Posterior vena cava (tissue), 2 donors: ENCODE measurements at regions of chr16 and their contacts with region 1.

Region 1: DNA sequence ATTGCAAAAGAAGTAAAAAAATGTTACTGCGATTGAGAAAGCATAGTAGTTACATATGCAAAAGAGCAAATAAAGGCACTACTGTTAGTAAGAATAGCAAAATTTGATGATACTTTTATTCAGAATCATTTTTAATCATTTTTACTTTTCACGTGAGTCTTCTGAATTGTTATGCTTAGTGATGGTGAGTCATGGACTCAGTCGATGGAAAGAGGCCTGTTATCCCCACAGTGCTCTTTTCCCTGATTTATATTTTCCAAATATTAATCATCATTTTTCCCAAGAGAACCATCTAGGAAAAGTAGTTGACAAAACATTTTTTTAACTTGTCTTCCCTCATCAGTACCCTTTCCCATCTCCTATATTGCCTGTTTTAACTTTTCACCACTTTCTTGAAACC is 181.1 kb downstream of the CHD9 start:
- DNase-seq: no peak

Region 2: GRCh38 chr16:53266156-53266555 is 30.3 kb after region 1 on chr16:
- intact Hi-C with region 1: loop called in 1 of 2 experiments (anchors 5 kb)
- DNase-seq: no peak

Region 3: DNA sequence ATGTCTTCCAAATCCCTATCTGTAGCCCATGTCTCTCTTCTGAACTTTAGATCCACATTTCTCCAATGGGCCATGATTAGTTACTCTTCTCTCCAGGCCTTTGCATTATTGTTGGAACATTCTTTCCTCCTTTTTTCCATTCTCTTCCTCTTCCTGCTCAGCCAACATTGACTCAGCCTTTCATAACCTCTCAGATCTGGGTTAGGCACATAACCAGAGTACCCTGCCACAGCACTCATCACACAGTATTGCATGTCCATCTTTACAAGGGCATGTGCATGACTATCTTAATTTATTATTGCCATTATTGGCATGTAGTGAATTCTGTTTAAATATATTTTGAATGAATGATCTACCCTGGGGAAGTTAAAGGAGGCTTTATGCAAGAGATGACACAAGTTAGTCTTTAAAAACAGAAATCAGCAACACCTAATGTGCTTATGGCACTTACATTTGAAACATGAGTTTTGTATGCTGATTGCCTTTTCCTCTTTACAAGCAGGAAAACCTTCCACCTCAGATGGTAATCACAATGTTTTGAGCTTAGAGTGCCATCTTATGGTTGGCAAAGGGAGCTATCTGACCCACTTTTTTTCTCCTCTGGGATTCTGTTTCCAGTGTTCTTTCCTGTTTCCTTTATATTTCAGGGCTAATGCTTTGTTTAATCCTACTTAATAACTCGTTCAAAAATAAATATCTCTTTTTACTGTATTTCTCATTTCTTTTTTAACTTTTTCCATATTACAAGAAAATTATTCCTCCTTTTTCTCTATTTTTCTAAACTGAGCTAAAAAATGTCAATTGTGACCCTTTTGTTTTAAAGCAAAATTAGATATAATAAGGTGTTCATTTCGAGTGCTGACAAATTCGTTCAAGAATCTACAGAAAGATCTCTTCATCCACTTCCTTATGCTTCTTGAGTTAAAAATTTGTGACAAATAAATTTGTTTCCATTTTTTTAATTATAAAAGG is 47.4 kb after region 1 on chr16:
- intact Hi-C with region 1: no loop called
- DNase-seq: no peak